ENCODE measurements at regions of chr2 and their contacts with region 1.

Region 1: DNA sequence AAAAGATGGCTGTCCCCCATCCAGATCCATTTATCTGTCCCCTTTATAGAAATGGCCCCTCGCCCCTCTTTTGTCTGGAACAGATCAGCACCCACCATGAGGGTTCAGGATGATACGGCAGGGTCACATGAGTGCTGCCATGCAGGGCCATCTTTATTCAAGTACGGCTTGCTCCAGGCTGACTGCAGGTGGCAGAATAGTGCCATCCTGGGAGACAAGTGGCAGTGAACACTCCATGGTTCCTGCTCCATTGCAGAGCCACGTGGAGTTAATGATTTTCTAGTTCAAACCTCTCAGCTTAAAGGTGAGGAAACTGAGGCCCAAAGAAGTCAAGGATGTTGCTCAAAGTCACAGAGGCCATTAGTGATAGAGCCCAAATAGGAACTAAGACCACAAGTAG is 180.6 kb downstream of the CLIP4 start:
- DNase-seq: no peak
- H3K4me3 ChIP-seq: no peak overlapping the region
- H3K27ac ChIP-seq: no peak overlapping the region
- H3K4me1 ChIP-seq: no peaks in the 10 kb centered on the region
- H3K27me3 ChIP-seq: no peaks in the 10 kb centered on the region
- CTCF ChIP-seq: no peak
- POLR2A ChIP-seq: no peak

Region 2: GRCh38 chr2:29104688-29105087 is 191.2 kb before region 1 on chr2:
- intact Hi-C with region 1: loop called (anchors 5 kb)
- DNase-seq: no peak
- H3K4me3 ChIP-seq: no peak overlapping the region
- H3K27ac ChIP-seq: no peak overlapping the region
- H3K4me1 ChIP-seq: no peaks in the 10 kb centered on the region
- H3K27me3 ChIP-seq: no peaks in the 10 kb centered on the region
- CTCF ChIP-seq: no peak
- POLR2A ChIP-seq: no peak

Region 3: DNA sequence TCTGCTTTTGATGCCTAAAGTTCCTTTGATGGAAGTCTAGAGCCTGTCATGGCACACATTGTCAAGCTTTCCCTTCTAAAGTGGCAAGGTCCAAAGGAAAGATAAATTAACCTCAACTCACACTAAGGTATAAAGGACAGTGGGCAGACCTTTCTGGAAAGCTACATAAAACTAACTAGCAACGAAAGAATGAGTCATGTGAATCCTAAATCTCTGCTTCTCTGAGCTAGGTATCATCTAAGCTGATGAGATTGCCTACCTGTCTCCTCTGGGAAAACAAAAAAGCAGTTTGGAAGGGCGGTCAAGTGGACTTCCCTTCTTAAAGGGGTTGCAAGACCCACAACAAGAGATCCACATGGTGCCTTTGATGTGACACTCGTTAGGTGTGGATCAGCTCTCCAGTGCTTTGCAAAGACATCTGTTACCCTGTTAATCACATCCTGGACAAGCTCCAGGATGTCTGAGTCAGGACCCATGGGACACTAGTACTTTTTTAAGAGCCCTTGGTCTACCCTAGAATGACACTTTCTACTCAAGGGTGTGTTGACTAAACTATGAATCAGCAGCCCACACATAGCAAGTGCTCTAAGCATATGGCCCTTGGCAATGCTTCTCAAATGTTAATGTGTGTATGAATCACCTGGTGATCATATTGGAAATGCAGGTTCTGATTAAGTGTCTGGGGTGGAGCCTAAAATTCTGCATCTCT is 452.1 kb after region 1 on chr2:
- intact Hi-C with region 1: no loop called
- DNase-seq: no peak
- H3K4me3 ChIP-seq: no peak overlapping the region
- H3K27ac ChIP-seq: no peak overlapping the region
- H3K4me1 ChIP-seq: no peaks in the 10 kb centered on the region
- H3K27me3 ChIP-seq: no peaks in the 10 kb centered on the region
- CTCF ChIP-seq: no peak
- POLR2A ChIP-seq: no peak